Gastrocnemius medialis (tissue), 4 donors: ENCODE measurements at regions of chr1 and their contacts with region 1.

Region 1: DNA sequence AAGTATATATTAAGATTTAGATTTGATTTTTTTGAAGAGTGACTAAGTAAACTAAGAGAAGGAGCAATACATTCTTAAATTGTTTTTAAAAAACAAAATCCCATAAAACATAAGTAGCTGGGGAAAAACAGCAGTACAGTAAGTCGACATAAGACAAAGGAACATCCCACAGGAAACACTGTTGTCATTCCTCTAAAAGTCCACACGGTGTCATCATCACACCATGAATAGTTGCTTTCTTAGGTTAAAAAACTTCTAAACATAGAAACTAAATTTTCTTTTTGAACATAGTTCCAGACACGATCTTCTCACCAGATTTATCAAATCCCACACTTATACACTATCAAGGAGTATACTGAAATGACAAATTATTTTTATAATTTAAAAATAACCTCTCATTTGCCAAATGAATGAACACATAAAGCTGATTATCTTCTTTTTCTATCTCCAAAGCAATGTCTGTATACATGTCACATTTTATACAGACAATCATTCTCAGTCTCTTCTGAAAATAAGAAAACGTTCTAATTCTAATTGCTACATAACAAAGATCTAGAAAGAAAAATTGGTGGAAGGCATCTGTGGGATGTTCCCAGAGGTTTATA is 15.8 kb downstream of the ODF2L start:
- DNase-seq: no peak
- ATAC-seq: peak; percentile 45 to 75
- H3K4me3 ChIP-seq: no peak overlapping the region
- H3K27ac ChIP-seq: no peak overlapping the region
- H3K4me1 ChIP-seq: no peaks in the 10 kb centered on the region
- H3K27me3 ChIP-seq: no peaks in the 10 kb centered on the region
- CTCF ChIP-seq: peak; percentile 60 to 83 (median 73)
- POLR2A ChIP-seq: no peak

Region 2: GRCh38 chr1:86470859-86471258 is 90.5 kb after region 1 on chr1:
- in situ Hi-C with region 1: no loop called
- intact Hi-C with region 1: loop called (anchors 10 kb)
- DNase-seq: no peak
- ATAC-seq: no peak
- H3K4me3 ChIP-seq: no peak overlapping the region
- H3K27ac ChIP-seq: no peak overlapping the region
- H3K4me1 ChIP-seq: no peaks in the 10 kb centered on the region
- H3K27me3 ChIP-seq: no peaks in the 10 kb centered on the region
- CTCF ChIP-seq: no peak
- POLR2A ChIP-seq: no peak

Region 3: DNA sequence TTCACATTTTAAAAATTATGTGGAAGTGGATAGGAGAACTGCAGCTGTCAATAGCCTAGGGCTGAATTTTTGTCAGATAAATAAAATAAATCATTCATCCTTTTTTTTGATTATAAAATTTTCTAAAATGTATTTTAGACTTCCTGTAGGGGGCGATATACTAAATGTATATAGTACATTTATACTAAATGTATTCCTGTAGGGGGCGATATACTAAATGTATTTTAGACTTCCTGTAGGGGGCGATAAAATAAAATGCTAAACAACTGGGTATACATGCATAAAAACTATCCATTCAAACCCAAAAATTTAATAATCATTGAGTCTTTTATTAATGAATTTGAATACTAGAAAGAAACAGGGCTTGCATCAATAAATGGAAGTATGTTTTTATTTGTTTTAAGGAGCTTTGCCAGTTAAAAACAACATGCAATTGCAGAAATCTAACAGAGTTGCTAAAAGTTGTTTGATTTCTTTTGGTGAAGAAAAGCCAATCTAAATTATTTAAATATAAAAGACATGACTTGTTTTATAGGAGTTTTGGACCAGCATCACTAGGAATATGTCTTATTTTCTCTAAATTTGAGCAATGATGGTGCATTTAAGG is 119.7 kb after region 1 on chr1:
- in situ Hi-C with region 1: loop called in 2 of 4 experiments (anchors 10 kb)
- intact Hi-C with region 1: loop called (anchors 2 kb)
- DNase-seq: no peak
- ATAC-seq: no peak
- H3K4me3 ChIP-seq: no peak overlapping the region
- H3K27ac ChIP-seq: no peak overlapping the region
- H3K4me1 ChIP-seq: no peaks in the 10 kb centered on the region
- H3K27me3 ChIP-seq: no peaks in the 10 kb centered on the region
- CTCF ChIP-seq: peak in 4 of 5 experiments; percentile 58 to 81 (median 68)
- POLR2A ChIP-seq: no peak